Posterior vena cava (tissue), 2 donors: ENCODE measurements at regions of chr12 and their contacts with region 1.

Region 1: GRCh38 chr12:97097734-97098133 is 190.7 kb downstream of the NEDD1 start:
- DNase-seq: no peak

Region 2: DNA sequence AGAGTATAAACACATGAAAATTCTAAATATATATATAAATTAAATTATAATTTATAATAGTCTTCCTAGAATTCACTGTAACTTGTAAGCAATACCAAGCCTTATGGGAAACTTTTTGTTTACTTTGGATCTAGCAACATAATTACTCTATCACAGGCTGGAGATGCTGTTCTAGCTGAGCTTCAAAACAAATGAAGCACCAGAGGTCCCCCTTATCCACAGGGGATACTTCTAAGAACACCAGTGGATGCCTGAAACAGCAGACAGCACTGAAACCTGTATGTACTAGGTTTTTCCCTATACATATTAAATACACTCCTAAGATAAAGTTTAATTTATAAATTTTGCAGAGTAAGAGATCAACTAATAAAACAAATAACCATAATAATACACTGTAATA is 794.1 kb before region 1 on chr12:
- intact Hi-C with region 1: loop called in 1 of 2 experiments (anchors 10 kb)
- DNase-seq: no peak